ENCODE measurements at regions of chr18 and their contacts with region 1.

Region 1: GRCh38 chr18:55314615-55315237 is 273.3 kb downstream of the TCF4 start:
- DNase-seq: no peak
- H3K4me3 ChIP-seq: no peak overlapping the region
- H3K27ac ChIP-seq: no peak overlapping the region
- H3K4me1 ChIP-seq: peaks cover 13 to 98% (median 70%) of the 10 kb centered on the region in 6 donors
- H3K27me3 ChIP-seq: no peaks in the 10 kb centered on the region
- CTCF ChIP-seq: no peak
- POLR2A ChIP-seq: no peak

Region 2: DNA sequence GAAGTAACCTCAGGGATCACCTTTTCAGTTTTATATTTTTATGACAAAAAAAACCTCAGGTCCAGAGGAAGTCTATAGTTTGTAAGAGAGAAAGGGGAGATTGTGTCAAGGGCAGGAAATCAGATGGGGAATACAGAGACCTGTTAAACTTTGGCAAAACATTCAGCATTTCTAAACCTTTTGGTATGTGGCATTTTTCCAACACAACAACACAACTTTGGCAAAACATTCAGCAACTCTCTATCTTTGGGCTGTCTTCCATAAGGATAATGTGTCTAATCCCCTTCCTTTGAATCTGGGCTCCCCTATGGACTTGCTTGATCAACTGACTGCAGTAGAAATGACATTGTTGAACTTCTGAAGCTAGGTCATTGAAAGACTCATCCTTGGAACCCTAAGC is 134.9 kb before region 1 on chr18:
- intact Hi-C with region 1: no loop called
- DNase-seq: no peak
- H3K4me3 ChIP-seq: no peak overlapping the region
- H3K27ac ChIP-seq: no peak overlapping the region
- H3K4me1 ChIP-seq: no peaks in the 10 kb centered on the region
- H3K27me3 ChIP-seq: no peaks in the 10 kb centered on the region
- CTCF ChIP-seq: no peak
- POLR2A ChIP-seq: no peak

Region 3: DNA sequence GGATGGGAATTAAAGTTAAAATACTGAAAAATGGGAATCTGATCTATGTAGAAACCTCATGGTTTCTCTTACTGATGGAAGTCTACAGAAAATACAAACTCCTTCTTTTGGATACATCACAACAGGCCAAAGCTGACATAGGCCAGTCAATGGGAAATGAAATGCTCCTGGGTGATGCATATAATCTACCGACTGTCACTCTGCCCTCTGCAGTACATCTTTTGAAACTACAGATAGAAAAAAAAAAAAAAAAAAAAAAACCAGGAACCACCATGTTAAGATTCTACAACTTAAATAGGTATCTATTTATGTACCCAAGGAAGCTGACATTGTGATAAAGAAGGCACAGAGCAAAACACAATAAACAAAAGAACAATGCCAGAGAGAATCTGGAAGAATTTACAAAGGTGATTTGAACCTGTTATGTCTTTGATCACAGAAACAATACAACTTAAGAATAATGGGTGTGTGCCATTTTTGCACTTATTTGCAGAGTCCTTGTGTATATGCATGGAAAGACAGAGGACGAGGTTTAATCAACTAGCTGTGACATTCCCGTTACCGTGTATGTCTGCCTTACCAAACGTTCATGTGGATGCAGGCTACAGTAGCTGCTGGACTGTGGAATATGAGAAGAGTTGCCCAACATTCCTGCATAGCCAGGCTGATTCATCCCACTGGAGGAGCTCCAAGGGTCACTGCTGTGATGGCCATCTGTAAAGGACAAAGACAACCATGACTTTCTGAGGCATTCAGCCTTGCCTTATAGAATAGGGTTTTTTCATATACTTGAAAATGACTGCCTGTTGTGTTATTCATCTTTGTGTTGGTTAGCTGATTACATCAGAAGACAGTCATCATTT is 39.5 kb before region 1 on chr18:
- intact Hi-C with region 1: loop called (anchors 5 kb)
- DNase-seq: no peak
- H3K4me3 ChIP-seq: no peak overlapping the region
- H3K27ac ChIP-seq: peak overlapping the region in 1 of 8 donors; percentile 24
- H3K4me1 ChIP-seq: peaks cover 0 to 4% (median 3%) of the 10 kb centered on the region in 6 donors
- H3K27me3 ChIP-seq: no peaks in the 10 kb centered on the region
- CTCF ChIP-seq: peak in 2 of 11 experiments; percentile 18 to 29
- POLR2A ChIP-seq: no peak